Activated CD4-positive, alpha-beta T cell treated with anti-CD3 and anti-CD28 coated beads, Interleukin-2, amount 10 ng/mL, durations not matched to agents 7 days and 5 days (primary cell): ENCODE measurements at regions of chr11 and their contacts with region 1.

Region 1: DNA sequence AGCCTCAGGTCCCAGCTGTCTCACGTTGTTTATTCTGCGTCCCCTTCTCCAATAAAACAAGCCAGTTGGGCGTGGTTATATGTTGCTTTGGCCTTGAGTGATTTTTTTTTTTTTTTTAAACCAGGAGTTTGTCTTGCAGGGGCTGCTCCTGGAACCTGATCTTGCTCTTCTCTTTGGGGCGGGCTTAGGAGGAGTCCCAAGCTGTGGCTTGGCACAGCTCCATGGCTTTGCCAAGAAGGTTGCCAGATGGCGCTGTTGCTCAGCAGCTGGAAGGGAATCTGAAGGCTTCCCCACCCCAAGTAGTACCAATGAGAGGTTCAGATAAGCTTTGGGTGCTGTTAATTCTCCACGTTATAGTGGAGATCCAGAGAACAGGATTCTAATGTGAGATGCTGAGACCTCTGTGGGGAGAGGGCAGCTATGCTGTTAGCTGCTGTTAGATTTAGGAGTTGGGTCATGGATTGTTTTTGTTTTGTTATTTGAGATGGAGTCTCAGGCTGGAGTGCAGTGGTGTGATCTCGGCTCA is 2.0 kb upstream of the FERMT3 start:
- DNase-seq: peak; percentile 86
- H3K4me3 Mint-ChIP-seq: peak overlapping the region; percentile 33
- H3K27ac Mint-ChIP-seq: peak overlapping the region; percentile 77
- H3K4me1 Mint-ChIP-seq: peaks cover 51% of the 10 kb centered on the region
- H3K27me3 Mint-ChIP-seq: no peaks in the 10 kb centered on the region

Region 2: GRCh38 chr11:64216879-64217278 is 12.4 kb after region 1 on chr11:
- CTCF ChIA-PET with region 1: interaction called, 94 read pairs
- POLR2A ChIA-PET with region 1: interaction called, 5 read pairs
- DNase-seq: no peak
- H3K4me3 Mint-ChIP-seq: no peak overlapping the region
- H3K27ac Mint-ChIP-seq: no peak overlapping the region
- H3K4me1 Mint-ChIP-seq: peaks cover 16% of the 10 kb centered on the region
- H3K27me3 Mint-ChIP-seq: no peaks in the 10 kb centered on the region

Region 3: DNA sequence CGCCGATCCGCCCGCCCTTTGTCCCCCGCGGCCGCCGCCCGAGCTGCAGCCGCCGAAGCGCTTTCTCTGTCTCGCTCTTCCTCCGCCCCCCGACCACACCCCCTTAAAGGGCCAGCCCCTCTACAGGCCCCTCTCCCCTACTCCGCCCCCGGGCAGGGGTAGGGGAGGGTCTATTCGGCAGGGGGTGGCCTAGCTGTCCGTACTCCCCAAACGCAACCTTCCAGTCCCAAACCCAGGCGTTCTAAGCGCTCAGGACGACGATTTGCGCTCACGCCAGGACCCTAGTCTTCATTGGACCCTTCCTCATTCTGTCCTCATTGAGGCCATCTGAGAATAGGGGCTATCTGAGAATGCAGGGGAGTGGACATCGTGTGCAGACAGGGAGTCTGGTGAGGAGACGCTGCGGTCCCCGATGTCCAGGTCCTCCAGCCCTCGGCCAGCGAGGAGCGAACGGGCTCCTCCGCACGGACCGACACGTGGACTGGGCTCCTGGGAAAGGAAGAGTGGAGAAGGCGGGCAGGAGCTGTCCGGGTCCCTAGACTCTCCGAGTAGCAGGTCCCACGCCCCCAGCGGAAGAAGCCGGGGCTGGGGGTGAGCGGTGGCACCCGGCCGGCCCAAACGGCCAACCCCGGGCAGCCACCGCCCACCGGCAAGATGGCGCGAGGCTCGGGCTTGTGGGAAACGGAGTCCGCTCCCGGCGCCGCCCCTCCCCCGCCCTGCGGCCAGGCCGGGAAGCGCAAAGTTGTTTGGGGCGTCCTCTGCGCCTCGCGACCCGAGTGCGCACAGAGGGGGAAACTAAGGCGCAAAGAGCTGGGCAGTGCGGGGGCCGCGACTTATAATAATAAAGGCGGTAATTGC is 42.6 kb after region 1 on chr11 and contains the start of gene PPP1R14B:
- CTCF ChIA-PET with region 1: interaction called, 13 read pairs
- POLR2A ChIA-PET with region 1: no interaction called
- DNase-seq: peak; percentile 82
- H3K4me3 Mint-ChIP-seq: peak within 1 kb of the TSS; percentile 81
- H3K27ac Mint-ChIP-seq: peak within 1 kb of the TSS; percentile 87
- H3K4me1 Mint-ChIP-seq: peaks cover 48% of the 10 kb centered on the region
- H3K27me3 Mint-ChIP-seq: no peaks in the 10 kb centered on the region
- total RNA-seq, gene PPP1R14B: 81.1 to 86.0 TPM

Region 4: DNA sequence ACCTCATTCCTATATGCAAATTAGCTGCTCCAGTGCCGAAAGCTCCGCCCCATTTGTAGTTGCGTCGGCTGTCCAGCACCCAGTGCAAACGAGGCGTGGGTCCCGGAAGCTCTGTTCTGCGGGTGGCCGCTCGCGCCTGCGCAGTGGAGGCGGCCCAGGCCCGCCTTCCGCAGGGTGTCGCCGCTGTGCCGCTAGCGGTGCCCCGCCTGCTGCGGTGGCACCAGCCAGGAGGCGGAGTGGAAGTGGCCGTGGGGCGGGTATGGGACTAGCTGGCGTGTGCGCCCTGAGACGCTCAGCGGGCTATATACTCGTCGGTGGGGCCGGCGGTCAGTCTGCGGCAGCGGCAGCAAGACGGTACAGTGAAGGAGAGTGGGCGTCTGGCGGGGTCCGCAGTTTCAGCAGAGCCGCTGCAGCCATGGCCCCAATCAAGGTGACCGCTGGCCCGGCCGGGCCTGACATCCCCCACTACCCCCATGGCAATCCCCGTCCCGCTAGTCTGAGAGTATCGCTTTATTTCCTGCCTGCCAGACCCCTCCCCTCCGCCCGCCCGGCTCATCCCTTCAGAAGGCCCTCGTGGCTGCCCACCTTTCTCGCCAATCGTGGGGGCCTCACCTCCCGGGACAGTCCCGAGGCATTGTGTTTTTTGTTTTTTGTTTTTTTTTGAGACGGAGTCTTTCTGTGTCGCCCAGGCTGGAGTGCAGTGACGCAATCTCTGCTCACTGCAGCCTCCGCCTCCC is 113.6 kb after region 1 on chr11 and contains the start of gene PRDX5:
- CTCF ChIA-PET with region 1: interaction called, 19 read pairs
- POLR2A ChIA-PET with region 1: interaction called, 8 read pairs
- DNase-seq: peak; percentile 96
- H3K4me3 Mint-ChIP-seq: peak within 1 kb of the TSS; percentile 94
- H3K27ac Mint-ChIP-seq: peak within 1 kb of the TSS; percentile 99
- H3K4me1 Mint-ChIP-seq: peaks cover 36% of the 10 kb centered on the region
- H3K27me3 Mint-ChIP-seq: no peaks in the 10 kb centered on the region
- total RNA-seq, gene PRDX5: 97.4 to 106 TPM